SK-N-SH (cell line): ENCODE measurements at regions of chr1 and their contacts with region 1.

Region 1: GRCh38 chr1:183915625-183916510 is 110.9 kb downstream of the RGL1 start:
- DNase-seq: peak; percentile 63
- H3K4me3 ChIP-seq: peak overlapping the region in 1 of 2 experiments; percentile 27; a peak in 1 of 4 replicates
- H3K27ac ChIP-seq: peak overlapping the region; percentile 68 to 80
- H3K4me1 ChIP-seq: peaks cover 15 to 29% of the 10 kb centered on the region in 2 experiments
- H3K27me3 ChIP-seq: no peaks in the 10 kb centered on the region
- CTCF ChIP-seq: peak; percentile 86
- EP300 ChIP-seq: peak in 1 of 2 experiments; percentile 68; a peak in 1 of 4 replicates
- RAD21 ChIP-seq: peak; percentile 97

Region 2: DNA sequence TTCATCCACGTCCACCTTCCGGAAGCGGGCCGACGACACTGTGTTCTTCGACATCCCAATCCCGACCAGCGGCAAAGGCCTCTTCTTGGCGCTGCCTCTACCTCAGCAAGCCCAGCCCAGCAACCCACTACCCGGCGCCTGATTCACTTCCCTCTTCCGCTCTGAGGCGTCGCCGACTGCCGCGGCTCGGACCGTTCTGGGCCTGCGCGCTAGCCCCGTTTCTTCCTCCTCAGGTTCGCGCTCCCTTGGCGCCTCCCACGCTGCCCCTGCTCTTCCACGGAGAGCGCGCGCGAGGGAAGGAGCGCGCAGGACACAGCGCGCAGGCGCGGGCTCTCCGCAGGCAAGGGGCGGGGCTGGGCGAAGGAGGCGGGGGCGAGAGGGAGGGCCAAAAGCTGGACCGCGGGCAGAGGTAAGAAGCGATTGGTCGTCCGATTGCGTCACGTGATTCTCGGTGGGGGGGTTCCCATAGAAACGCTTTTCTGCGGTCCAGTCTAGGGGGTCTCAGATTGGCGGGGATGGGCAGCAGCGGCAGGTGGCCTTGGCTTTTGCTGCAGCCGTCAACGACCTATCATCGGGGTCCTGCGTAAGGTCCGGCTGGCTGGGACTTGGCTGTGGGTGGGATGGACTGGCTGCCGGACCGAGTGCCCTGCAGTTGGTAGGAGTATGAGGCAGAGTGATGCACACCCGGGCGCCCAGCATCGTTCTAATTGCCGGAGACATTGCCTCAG is 280.1 kb before region 1 on chr1 and contains the start of gene ARPC5:
- CTCF ChIA-PET with region 1: interaction called, 20 read pairs
- POLR2A ChIA-PET with region 1: no interaction called
- DNase-seq: peak; percentile 93
- H3K4me3 ChIP-seq: peak within 1 kb of the TSS; percentile 85 to 92
- H3K27ac ChIP-seq: peak within 1 kb of the TSS; percentile 82 to 94
- H3K4me1 ChIP-seq: peaks cover 10 to 32% of the 10 kb centered on the region in 2 experiments; a peak in 3 of 4 replicates
- H3K27me3 ChIP-seq: no peaks in the 10 kb centered on the region
- CTCF ChIP-seq: no peak
- EP300 ChIP-seq: no peak
- RAD21 ChIP-seq: no peak
- polyA plus RNA-seq, gene ARPC5: 66.8 and 97.6 TPM in 2 replicates

Region 3: DNA sequence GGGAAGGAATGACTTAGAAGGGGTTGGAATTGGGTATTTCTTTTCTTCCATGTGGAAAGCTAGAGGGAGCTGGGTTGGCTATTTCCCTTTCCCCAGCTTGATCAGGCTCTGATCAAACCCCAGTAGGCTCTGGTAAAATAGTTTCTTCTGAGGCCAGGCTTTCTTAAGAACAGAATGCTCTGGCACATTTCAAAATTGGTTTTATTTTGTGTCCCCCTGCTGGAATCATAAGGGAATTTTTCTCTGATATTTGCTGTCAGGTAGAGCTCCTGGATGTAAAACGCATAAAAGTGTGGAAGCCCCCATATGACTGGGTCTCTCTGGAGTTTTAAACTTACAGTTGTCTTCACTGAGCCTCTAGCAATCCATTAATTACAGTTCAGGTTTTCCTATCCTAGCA is 245.7 kb before region 1 on chr1:
- CTCF ChIA-PET with region 1: interaction called, 14 read pairs
- POLR2A ChIA-PET with region 1: no interaction called
- DNase-seq: no peak
- H3K4me3 ChIP-seq: no peak overlapping the region
- H3K27ac ChIP-seq: no peak overlapping the region
- H3K4me1 ChIP-seq: no peaks in the 10 kb centered on the region; a peak in 1 of 4 replicates
- H3K27me3 ChIP-seq: no peaks in the 10 kb centered on the region
- CTCF ChIP-seq: peak; percentile 11; the same call in 1 of the 2 replicates
- EP300 ChIP-seq: no peak
- RAD21 ChIP-seq: no peak

Region 4: DNA sequence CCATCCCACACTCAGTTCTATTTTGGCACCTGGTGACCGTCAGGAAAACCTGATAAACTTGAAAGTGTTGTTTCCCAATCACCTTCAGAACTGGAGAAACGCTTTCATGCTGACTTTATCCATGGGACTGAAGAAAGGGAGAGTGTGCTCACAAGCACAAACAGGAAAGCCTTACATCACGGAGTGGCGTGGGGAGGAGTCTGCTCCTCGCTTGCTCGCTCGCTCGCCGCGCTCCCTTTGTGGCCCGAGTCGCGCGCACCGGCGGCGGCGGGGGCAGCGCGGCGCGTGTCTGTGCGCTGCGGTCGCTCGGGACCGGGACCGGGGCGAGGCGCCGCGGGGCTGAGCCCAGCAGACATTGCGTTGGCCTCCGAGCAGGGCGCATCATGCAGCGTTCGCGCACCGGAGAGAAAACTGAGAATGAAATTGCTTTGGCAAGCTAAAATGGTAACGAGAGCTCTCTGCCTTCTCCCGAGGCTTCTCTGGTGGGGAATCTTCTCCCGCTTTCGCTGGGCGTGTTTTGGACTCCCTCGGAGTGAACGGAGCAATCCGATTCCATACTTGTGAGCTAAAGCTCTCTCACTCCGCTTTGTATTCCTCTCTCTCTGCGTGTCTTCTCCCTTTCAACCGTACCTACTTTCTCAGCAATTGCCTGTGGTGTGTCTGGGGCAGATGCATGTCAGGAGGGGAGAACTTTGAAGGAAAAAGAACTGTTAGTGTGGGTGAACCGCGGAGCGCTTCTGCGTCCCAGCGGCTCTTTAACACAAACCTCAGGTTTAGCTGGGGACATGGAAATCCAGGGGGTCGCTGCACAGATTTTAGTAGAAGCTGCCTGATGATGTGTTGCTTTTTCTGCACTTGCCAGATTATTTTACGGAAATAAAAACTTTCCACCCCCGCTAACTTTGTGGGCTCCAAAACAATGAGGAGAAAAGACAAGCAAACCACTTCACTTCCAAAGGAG is 110.7 kb before region 1 on chr1 and contains the start of gene RGL1:
- CTCF ChIA-PET with region 1: interaction called, 14 read pairs
- POLR2A ChIA-PET with region 1: no interaction called
- DNase-seq: peak; percentile 82
- H3K4me3 ChIP-seq: peak within 1 kb of the TSS; percentile 79 to 81
- H3K27ac ChIP-seq: peak within 1 kb of the TSS; percentile 71 to 96
- H3K4me1 ChIP-seq: peaks cover 14 to 23% of the 10 kb centered on the region in 2 experiments; a peak in 3 of 4 replicates
- H3K27me3 ChIP-seq: no peaks in the 10 kb centered on the region
- CTCF ChIP-seq: no peak
- EP300 ChIP-seq: no peak
- RAD21 ChIP-seq: no peak
- polyA plus RNA-seq, gene RGL1: 8.3 and 10.7 TPM in 2 replicates

Region 5: DNA sequence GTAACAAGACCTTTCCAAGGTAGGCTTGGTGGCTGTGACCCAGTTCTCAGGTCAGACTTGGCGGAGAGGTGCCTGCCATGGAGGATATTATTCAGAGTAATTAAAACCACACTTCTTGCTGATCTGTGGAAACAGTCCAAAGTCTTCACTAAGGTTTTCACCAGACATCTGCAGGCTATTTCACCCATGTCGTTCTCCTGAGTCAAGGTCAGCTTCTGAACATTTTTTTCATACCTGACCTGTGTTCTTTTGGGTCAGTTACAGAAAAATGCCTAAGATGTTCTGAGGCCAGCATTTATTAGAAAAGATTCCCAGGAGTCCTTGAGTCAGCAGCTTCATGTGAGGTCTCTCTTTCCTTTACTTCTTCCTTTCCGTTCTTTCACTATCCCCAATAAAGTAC is 56.0 kb before region 1 on chr1:
- CTCF ChIA-PET with region 1: interaction called, 13 read pairs
- POLR2A ChIA-PET with region 1: no interaction called
- DNase-seq: no peak
- H3K4me3 ChIP-seq: no peak overlapping the region
- H3K27ac ChIP-seq: peak overlapping the region in 1 of 2 experiments; percentile 81; a peak in 2 of 4 replicates
- H3K4me1 ChIP-seq: peaks cover 0 to 15% of the 10 kb centered on the region in 2 experiments; a peak in 2 of 4 replicates
- H3K27me3 ChIP-seq: no peaks in the 10 kb centered on the region
- CTCF ChIP-seq: no peak
- EP300 ChIP-seq: no peak
- RAD21 ChIP-seq: no peak

Region 6: DNA sequence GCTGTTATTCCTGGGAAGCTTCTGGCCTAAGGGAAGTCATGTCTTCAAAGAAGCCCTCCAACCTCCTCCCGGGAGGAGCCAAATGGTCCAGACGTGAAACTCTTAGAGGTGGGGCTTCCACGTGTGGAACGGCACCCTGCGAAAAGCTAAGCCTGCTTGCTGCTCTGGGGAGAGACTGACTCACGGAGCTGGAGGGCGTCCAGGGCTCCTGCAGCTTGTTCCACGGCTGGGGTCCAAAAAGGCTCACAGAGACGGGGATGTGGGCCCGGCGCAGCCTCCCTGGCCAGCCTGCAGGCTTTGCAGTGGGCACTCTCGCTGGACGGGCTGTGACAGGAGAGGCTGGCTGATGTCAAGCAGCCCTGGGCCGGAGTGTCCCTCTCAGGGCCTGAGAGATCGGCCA is 16.5 kb after region 1 on chr1:
- CTCF ChIA-PET with region 1: interaction called, 24 read pairs
- POLR2A ChIA-PET with region 1: no interaction called
- DNase-seq: no peak
- H3K4me3 ChIP-seq: no peak overlapping the region
- H3K27ac ChIP-seq: no peak overlapping the region; a peak in 1 of 4 replicates
- H3K4me1 ChIP-seq: peaks cover 0 to 13% of the 10 kb centered on the region in 2 experiments; a peak in 2 of 4 replicates
- H3K27me3 ChIP-seq: no peaks in the 10 kb centered on the region
- CTCF ChIP-seq: no peak
- EP300 ChIP-seq: no peak
- RAD21 ChIP-seq: no peak

Region 7: DNA sequence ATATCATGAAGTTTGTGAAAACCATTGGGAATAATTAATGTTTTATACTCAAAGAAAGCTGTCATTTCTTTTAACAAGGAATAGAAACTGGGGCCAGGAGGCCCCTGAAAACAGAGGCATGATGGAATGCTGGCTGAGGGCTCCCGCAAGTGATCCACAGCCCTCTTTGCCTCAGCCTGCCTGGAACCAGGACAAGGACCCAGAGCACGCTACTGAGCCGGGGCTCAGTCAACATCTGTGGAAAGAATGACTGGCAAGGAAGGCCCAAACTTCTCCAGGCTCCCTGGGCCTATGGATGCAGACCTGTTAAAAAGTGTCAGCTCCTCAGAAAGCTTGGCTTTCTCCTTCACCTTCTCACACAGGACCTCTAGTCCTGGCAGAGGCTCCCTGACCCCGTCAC is 89.1 kb after region 1 on chr1:
- CTCF ChIA-PET with region 1: no interaction called
- POLR2A ChIA-PET with region 1: no interaction called
- DNase-seq: no peak
- H3K4me3 ChIP-seq: no peak overlapping the region
- H3K27ac ChIP-seq: no peak overlapping the region
- H3K4me1 ChIP-seq: peaks cover 3 to 19% of the 10 kb centered on the region in 2 experiments; a peak in 2 of 4 replicates
- H3K27me3 ChIP-seq: no peaks in the 10 kb centered on the region
- CTCF ChIP-seq: no peak
- EP300 ChIP-seq: no peak
- RAD21 ChIP-seq: no peak